ENCODE measurements at regions of chr5 and their contacts with region 1.

Region 1: DNA sequence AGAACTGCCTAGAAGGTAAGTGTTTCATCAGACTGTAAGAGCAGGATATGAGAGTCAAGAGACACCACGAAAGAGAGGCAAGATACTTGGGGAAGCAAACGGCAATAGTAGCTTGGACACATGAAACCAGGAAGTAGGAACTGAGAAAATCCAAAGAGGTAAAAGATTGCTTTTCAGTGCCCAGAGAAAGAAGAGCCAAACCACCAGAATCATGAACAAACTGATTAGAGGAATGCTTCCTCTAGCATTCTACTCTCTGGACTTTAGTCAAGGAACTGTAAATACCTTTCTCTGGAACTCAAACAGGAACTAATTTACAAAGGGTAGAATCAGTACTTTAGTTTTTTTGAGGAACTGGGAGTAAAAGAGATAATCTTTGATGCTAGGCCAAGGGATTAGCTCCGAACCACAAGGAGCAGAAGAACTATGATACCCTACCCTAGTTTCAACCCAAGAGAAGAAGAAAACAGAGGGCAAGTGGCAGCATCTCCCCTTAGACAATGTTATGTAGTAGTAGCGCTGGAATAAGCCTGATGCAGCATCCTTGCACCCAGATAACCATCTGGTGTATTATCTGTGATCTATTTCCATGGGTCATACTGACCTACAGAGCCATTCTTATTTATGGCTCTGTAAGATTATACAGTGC is 41.3 kb downstream of the EFCAB9 start:
- DNase-seq: no peak
- ATAC-seq: no peak; the same call in 1 of the 2 replicates
- H3K4me3 ChIP-seq: no peak overlapping the region
- H3K27ac ChIP-seq: no peak overlapping the region
- H3K4me1 ChIP-seq: no peaks in the 10 kb centered on the region
- H3K27me3 ChIP-seq: no peaks in the 10 kb centered on the region
- CTCF ChIP-seq: no peak

Region 2: DNA sequence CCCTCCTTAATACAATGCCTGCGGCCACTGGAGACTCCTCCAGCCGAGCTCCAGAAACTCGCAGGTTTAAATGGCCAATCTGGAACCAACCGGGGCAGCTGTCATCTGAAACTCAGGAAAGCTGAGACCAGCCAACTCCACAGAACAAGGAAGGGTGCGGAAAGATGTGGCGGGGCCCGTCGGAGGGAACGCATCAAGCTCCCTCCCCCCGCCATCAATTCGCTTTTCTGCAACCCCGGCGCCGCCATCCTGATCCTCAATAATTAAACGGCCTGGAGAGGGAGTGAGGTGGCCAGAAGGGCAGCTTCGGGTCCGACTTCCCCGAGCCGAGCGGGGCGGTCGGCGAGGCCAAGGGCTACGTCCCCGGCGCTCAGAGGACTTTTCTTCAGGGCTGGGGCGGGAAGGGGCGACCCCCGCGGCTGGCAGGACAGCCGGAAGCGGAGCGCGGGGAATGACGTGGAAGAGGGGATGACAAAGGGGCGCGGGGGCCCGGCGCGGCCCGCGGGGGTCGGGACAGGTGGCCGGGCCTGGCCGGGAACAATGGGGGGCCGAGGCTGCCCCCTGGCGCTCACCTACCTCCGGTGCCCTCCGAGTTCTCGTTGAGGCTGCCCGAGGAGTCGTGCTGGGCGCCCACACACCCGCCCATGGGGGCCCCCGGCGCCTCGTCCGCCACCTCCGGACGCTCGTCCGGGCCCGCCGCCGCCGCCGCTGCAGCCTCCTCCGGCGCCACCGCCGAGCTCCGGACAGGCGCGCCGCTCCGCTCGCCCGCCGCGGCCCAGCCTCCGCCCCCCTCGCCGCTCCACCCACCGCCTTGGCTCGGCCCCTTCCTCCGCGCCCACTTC is 48.0 kb after region 1 on chr5 and contains the start of gene UBTD2:
- CTCF ChIA-PET with region 1: no interaction called
- POLR2A ChIA-PET with region 1: no interaction called
- intact Hi-C with region 1: loop called (anchors 5 kb)
- DNase-seq: peak; percentile 74
- ATAC-seq: peak; percentile 75
- H3K4me3 ChIP-seq: peak within 1 kb of the TSS; percentile 97
- H3K27ac ChIP-seq: peak within 1 kb of the TSS; percentile 43
- H3K4me1 ChIP-seq: peaks cover 21% of the 10 kb centered on the region
- H3K27me3 ChIP-seq: no peaks in the 10 kb centered on the region
- CTCF ChIP-seq: peak; percentile 49; the same call in 1 of the 2 replicates
- total RNA-seq, gene UBTD2: 22.6 and 23.8 TPM in 2 replicates

Region 3: GRCh38 chr5:172322028-172322965 is 87.0 kb after region 1 on chr5:
- CTCF ChIA-PET with region 1: no interaction called
- POLR2A ChIA-PET with region 1: no interaction called
- intact Hi-C with region 1: no loop called
- DNase-seq: no peak
- ATAC-seq: peak; percentile 15; the same call in 1 of the 2 replicates
- H3K4me3 ChIP-seq: no peak overlapping the region
- H3K27ac ChIP-seq: no peak overlapping the region
- H3K4me1 ChIP-seq: no peaks in the 10 kb centered on the region
- H3K27me3 ChIP-seq: no peaks in the 10 kb centered on the region
- CTCF ChIP-seq: no peak